ENCODE measurements at regions of chrX and their contacts with region 1.

Region 1: DNA sequence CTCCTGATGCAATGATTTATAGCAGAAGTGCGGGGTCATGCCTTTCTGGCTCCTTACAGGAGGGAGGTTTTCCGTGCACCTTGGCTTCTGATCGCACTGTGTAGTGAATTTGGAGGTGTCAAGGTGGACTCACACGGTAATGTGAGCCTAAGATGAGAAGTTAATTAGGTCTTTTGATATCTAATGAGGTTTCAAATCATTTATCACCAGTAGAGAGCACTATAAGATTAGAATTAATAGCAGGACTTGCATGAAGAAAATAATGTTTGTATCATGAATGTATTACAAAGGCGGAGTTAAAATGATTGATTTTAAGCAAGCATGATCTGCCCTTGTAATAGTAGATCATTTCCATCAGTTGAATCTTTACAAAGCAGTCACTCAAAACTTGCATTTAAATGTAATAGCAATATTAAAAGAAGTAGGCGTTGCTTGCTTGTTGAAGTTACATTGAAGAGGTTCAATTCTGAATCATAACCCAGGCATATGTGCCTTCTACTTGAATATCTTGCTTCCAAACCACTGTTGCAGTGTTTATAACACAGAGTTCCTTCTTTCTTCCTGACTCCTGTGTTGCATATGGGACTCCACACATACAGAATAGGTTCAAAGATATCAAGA is 152.1 kb downstream of the FMR1NB start:
- DNase-seq: peak; percentile 1
- H3K4me3 ChIP-seq: no peak overlapping the region
- H3K27ac ChIP-seq: no peak overlapping the region
- H3K4me1 ChIP-seq: no peaks in the 10 kb centered on the region
- H3K27me3 ChIP-seq: no peaks in the 10 kb centered on the region
- CTCF ChIP-seq: peak in 1 of 2 donors; percentile 13

Region 2: GRCh38 chrX:147978931-147979330 is 154.3 kb before region 1 on chrX:
- CTCF ChIA-PET with region 1: no interaction called
- dilution Hi-C with region 1: no loop called
- in situ Hi-C with region 1: no loop called
- intact Hi-C with region 1: no loop called
- DNase-seq: peak; percentile 18
- H3K4me3 ChIP-seq: no peak overlapping the region
- H3K27ac ChIP-seq: no peak overlapping the region
- H3K4me1 ChIP-seq: no peaks in the 10 kb centered on the region
- H3K27me3 ChIP-seq: peaks cover 2% of the 10 kb centered on the region
- CTCF ChIP-seq: no peak

Region 3: GRCh38 chrX:148282504-148282903 is 149.3 kb after region 1 on chrX:
- CTCF ChIA-PET with region 1: no interaction called
- dilution Hi-C with region 1: no loop called
- in situ Hi-C with region 1: no loop called
- intact Hi-C with region 1: no loop called
- DNase-seq: no peak
- H3K4me3 ChIP-seq: no peak overlapping the region
- H3K27ac ChIP-seq: no peak overlapping the region
- H3K4me1 ChIP-seq: no peaks in the 10 kb centered on the region
- H3K27me3 ChIP-seq: no peaks in the 10 kb centered on the region
- CTCF ChIP-seq: no peak

Region 4: GRCh38 chrX:148601034-148601433 is 467.8 kb after region 1 on chrX:
- CTCF ChIA-PET with region 1: no interaction called
- dilution Hi-C with region 1: no loop called
- in situ Hi-C with region 1: no loop called
- intact Hi-C with region 1: loop called (anchors 5 kb)
- DNase-seq: peak; percentile 26
- H3K4me3 ChIP-seq: no peak overlapping the region
- H3K27ac ChIP-seq: no peak overlapping the region
- H3K4me1 ChIP-seq: no peaks in the 10 kb centered on the region
- H3K27me3 ChIP-seq: no peaks in the 10 kb centered on the region
- CTCF ChIP-seq: peak in 1 of 2 donors; percentile 20